Right ventricle myocardium superior (tissue), 1 donor: ENCODE measurements at regions of chr1 and their contacts with region 1.

Region 1: GRCh38 chr1:156608036-156608674 is 6.9 kb upstream of the GPATCH4 start:
- DNase-seq: no peak
- ATAC-seq: peak; percentile 97

Region 2: GRCh38 chr1:156445789-156446263 is 162.3 kb before region 1 on chr1:
- intact Hi-C with region 1: loop called (anchors 5 kb)
- DNase-seq: peak; percentile 88
- ATAC-seq: peak; percentile 96